OCI-LY7 (cell line): ENCODE measurements at regions of chr17 and their contacts with region 1.

Region 1: DNA sequence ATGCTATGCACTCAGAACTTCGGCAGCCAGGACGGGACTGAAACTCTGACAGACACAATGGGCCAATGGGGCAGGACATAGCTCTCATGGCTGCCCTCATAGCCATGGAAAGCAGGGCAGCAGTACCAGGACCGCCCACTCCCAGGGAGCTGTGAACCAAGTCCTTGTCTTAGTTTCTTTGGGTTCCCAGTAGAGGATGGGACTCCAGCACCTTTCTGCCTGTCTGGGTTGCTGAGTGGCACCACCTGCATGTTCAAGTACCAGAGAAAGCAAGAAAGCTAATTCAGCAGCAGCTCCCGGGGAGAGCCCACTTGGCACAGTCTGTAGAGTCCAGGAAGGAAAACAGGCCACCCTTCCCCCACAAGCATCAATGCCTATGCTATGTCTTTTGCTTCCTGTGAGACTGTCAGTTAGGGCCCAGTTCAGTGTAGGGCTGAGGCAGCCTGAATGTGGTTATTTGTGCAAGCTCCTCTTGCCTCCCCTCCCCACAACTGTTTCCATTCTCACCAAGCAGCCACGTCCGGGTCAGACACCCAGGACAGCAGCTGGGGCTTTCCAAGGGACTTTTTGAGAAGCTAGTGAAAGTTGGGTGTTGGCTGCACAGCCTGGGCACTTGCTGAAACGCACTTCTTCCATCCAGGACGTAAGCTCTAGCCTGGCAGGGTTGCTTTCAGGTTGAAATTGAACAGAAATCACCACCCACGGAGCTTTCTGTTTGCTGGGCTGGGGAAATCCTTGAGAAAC is 7.8 kb downstream of the SUPT4H1 start:
- DNase-seq: peak; percentile 95
- H3K4me3 ChIP-seq: peak overlapping the region; percentile 63
- H3K27ac ChIP-seq: peak overlapping the region; percentile 99
- H3K4me1 ChIP-seq: peaks cover 80% of the 10 kb centered on the region
- CTCF ChIP-seq: no peak

Region 2: GRCh38 chr17:58317421-58318064 is 26.7 kb before region 1 on chr17:
- CTCF ChIA-PET with region 1: interaction called, 15 read pairs
- POLR2A ChIA-PET with region 1: interaction called, 29 read pairs
- intact Hi-C with region 1: loop called (anchors 1 kb)
- DNase-seq: peak; percentile 89
- H3K4me3 ChIP-seq: no peak overlapping the region
- H3K27ac ChIP-seq: peak overlapping the region; percentile 48
- H3K4me1 ChIP-seq: peaks cover 15% of the 10 kb centered on the region
- CTCF ChIP-seq: peak; percentile 90

Region 3: GRCh38 chr17:58329035-58329809 is 15.0 kb before region 1 on chr17:
- CTCF ChIA-PET with region 1: interaction called, 12 read pairs
- POLR2A ChIA-PET with region 1: interaction called, 179 read pairs
- intact Hi-C with region 1: loop called (anchors 1 kb)
- DNase-seq: peak; percentile 92
- H3K4me3 ChIP-seq: peak overlapping the region; percentile 98
- H3K27ac ChIP-seq: peak overlapping the region; percentile 99
- H3K4me1 ChIP-seq: peaks cover 55% of the 10 kb centered on the region
- CTCF ChIP-seq: peak; percentile 78